SK-N-SH (cell line): ENCODE measurements at regions of chr17 and their contacts with region 1.

Region 1: DNA sequence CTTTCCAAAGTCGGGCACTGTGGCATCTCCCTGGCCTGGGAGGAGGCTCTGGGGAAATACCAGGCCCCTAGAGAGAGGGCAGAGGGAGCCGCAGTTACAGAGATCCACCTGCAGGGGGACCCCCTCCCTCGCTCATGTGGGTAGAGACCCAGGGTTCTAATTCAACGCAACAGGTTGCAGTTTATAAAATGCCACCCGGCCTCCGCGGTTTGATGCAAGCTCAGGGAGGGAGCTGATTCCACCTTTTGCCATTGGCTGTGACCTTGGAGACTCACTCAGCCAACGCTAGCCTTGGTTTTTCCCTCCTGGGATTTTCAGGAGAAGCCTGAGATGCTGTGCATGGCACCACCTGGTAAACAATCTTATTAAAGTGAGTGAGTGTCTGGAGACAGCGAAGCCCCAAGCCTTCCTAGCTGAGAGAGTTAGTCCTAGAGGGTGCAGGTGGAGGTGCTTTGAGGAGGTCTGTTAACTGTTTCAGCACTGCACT is 12.1 kb downstream of the TTLL6 start:
- DNase-seq: peak; percentile 88
- H3K4me3 ChIP-seq: peak overlapping the region in 1 of 2 experiments; percentile 15; a peak in 1 of 4 replicates
- H3K27ac ChIP-seq: no peak overlapping the region
- H3K4me1 ChIP-seq: peaks cover 0 to 18% of the 10 kb centered on the region in 2 experiments; a peak in 2 of 4 replicates
- H3K27me3 ChIP-seq: peaks cover 29% of the 10 kb centered on the region
- CTCF ChIP-seq: peak; percentile 99
- EP300 ChIP-seq: no peak
- RAD21 ChIP-seq: peak; percentile 95

Region 2: GRCh38 chr17:48671697-48672171 is 133.2 kb before region 1 on chr17:
- CTCF ChIA-PET with region 1: interaction called, 15 read pairs
- POLR2A ChIA-PET with region 1: no interaction called
- DNase-seq: peak; percentile 76
- H3K4me3 ChIP-seq: peak overlapping the region; percentile 35 to 62; a peak in 3 of 4 replicates
- H3K27ac ChIP-seq: no peak overlapping the region
- H3K4me1 ChIP-seq: no peaks in the 10 kb centered on the region
- H3K27me3 ChIP-seq: peaks cover 79% of the 10 kb centered on the region
- CTCF ChIP-seq: peak; percentile 99
- EP300 ChIP-seq: no peak
- RAD21 ChIP-seq: peak; percentile 86

Region 3: DNA sequence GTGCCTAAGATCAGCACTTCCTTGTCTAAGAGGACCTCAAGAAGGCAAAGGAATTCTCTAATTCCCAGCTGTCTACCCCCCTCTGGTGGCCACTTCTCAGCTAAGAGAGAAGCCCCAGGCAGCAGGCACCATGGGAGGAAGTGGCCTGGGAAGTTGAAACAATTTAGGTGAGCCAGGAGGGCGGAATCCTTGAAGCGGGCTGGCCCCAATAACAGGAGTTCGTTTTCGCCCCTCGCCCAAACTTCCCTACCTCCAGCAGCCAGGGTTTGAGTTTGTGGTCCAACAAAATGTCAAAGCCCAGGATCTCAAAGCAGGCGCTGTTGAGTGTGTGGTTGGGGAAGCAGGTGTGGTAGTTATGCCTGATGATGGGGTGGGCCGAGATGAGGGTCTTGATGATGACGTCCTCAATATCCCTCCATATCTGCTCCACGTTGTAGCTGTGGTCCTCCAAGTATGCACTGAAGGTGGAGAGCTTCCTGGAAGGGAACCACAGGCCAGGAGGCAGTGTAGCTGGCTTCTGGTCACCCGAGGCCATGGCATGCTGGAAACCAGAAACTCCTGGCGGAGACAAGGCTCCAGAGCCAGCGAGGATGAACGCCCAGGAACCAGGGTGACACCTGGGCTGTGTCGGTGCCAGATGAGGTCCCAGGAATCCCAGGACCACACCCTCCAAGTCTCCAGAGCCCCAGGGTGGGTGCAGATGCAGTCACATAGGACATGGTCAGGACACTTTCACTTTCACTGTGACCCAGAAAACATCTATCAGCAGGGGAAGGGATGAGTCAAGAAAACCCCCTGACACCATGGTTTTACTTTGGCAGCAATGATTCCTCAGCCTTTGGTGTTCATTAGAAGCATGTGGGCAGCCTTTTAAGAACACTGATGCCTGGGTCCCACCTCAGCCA is 13.6 kb before region 1 on chr17:
- CTCF ChIA-PET with region 1: interaction called, 68 read pairs
- POLR2A ChIA-PET with region 1: no interaction called
- DNase-seq: peak; percentile 53
- H3K4me3 ChIP-seq: no peak overlapping the region; a peak in 1 of 4 replicates
- H3K27ac ChIP-seq: no peak overlapping the region
- H3K4me1 ChIP-seq: peaks cover 0 to 3% of the 10 kb centered on the region in 2 experiments; a peak in 1 of 4 replicates
- H3K27me3 ChIP-seq: peaks cover 44% of the 10 kb centered on the region
- CTCF ChIP-seq: peak; percentile 96
- EP300 ChIP-seq: no peak
- RAD21 ChIP-seq: peak; percentile 59

Region 4: GRCh38 chr17:48816774-48817590 is 12.0 kb after region 1 on chr17 and contains the start of gene TTLL6:
- CTCF ChIA-PET with region 1: interaction called, 74 read pairs
- POLR2A ChIA-PET with region 1: no interaction called
- DNase-seq: peak; percentile 97
- H3K4me3 ChIP-seq: peak within 1 kb of the TSS; percentile 45 to 62
- H3K27ac ChIP-seq: no peak within 1 kb of the TSS
- H3K4me1 ChIP-seq: peaks cover 0 to 9% of the 10 kb centered on the region in 2 experiments; a peak in 1 of 4 replicates
- H3K27me3 ChIP-seq: peaks cover 35% of the 10 kb centered on the region; the same call in 1 of the 2 replicates
- CTCF ChIP-seq: no peak
- EP300 ChIP-seq: no peak
- RAD21 ChIP-seq: no peak
- polyA plus RNA-seq, gene TTLL6: 3.1 and 5.1 TPM in 2 replicates

Region 5: GRCh38 chr17:48836004-48836403 is 31.0 kb after region 1 on chr17:
- CTCF ChIA-PET with region 1: interaction called, 18 read pairs
- POLR2A ChIA-PET with region 1: no interaction called
- DNase-seq: no peak
- H3K4me3 ChIP-seq: no peak overlapping the region
- H3K27ac ChIP-seq: no peak overlapping the region
- H3K4me1 ChIP-seq: peaks cover 3 to 11% of the 10 kb centered on the region in 2 experiments; a peak in 3 of 4 replicates
- H3K27me3 ChIP-seq: no peaks in the 10 kb centered on the region
- CTCF ChIP-seq: no peak
- EP300 ChIP-seq: no peak
- RAD21 ChIP-seq: no peak

Region 6: GRCh38 chr17:48850792-48851323 is 45.9 kb after region 1 on chr17:
- CTCF ChIA-PET with region 1: interaction called, 20 read pairs
- POLR2A ChIA-PET with region 1: no interaction called
- DNase-seq: no peak
- H3K4me3 ChIP-seq: no peak overlapping the region
- H3K27ac ChIP-seq: no peak overlapping the region
- H3K4me1 ChIP-seq: no peaks in the 10 kb centered on the region
- H3K27me3 ChIP-seq: no peaks in the 10 kb centered on the region
- CTCF ChIP-seq: no peak
- EP300 ChIP-seq: no peak
- RAD21 ChIP-seq: no peak